ENCODE measurements at regions of chr16 and their contacts with region 1.

Region 1: DNA sequence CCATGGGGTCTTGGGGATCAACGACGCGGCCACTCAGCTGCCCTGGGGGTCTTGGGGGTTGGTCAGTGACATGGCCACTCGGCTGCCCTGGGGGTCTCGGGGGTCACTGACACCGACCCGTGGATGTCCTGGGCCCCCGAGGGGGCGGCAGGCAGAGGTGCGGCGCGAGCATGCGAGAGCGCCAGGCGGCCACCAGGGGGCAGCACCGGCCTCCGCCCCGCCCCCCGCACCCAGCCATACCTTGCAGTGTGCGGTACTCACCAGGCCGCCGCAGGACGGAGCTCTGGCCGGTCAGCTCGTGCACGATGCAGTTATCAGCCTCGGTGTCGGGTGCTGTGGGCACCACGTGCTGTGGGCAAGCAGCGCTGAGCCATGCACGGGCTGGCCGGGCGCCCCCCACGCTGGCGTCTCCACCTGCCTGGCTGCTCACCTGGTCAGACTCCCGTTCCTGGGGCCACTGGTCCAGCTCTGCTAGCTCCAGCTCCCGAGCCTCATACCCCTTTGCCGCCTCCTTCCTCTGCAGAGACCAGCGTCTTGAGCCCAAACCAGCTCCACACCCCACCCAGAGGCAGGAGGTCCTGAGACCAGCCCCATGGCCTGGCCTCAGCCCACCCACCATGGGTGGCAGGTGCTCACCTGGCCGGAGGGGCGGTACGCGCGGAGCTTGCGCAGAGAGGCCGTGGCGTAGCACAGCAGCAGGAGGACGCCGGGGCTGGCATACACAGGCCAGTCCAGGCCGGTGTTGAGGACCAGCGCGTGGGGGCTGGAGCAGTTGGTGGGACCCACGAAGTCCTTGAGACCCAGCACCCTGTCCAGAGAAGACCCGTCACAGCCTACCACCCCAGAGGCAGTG is 31.2 kb downstream of the CTU2 start:
- DNase-seq: no peak
- ATAC-seq: peak; percentile 82
- H3K4me3 ChIP-seq: no peak overlapping the region
- H3K27ac ChIP-seq: no peak overlapping the region
- H3K4me1 ChIP-seq: no peaks in the 10 kb centered on the region
- H3K27me3 ChIP-seq: no peaks in the 10 kb centered on the region
- CTCF ChIP-seq: peak; percentile 93

Region 2: DNA sequence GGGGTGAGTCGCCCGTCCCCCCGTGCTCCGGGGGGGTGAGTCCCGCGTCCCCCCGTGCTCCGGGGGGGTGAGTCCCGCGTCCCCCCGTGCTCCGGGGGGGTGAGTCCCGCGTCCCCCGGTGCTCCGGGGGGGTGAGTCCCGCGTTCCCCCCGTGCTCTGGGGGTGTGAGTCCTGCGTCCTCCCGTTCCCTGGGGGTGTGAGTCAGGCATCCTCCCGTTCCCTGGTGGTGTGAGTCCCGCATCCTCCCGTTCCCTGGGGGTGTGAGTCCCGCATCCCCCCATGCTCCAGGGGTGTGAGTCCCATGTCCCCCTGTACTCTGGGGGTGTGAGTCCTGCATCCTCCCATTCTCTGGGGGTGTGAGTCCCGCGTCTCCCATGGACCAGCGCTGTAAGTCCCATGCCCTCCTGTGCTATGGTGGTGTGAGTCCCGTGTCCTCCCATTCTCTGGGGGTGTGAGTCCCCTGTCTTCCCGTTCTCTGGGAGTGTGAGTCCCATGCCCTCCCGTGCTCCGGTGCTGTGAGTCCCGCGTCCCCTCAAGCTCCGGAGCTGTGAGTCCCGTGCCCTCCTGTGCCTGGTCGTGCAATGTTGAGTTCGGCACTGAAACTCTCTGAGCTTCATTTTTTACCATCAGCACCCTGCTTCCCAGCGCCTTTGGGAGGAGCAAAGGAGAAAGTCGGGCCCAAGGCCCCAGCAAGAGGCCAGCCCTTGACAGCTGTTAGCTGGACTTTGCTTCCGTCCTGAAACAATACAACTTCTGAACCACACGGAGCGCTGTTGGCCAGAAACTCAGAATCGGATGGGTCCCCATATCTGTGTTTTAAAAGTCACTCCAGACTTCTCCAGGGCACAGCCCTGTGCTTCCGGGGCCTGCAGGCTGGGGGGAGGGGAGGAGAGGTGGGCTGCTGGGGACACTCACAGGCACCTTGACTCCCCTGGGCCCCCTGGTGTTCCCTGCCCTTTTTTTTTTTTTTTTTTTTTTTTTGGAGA is 178.8 kb before region 1 on chr16:
- CTCF ChIA-PET with region 1: interaction called, 11 read pairs
- POLR2A ChIA-PET with region 1: no interaction called
- in situ Hi-C with region 1: no loop called
- intact Hi-C with region 1: no loop called
- DNase-seq: no peak
- ATAC-seq: peak; percentile 81
- H3K4me3 ChIP-seq: peak overlapping the region in 1 of 2 experiments; percentile 24; a peak in 1 of 4 replicates
- H3K27ac ChIP-seq: no peak overlapping the region
- H3K4me1 ChIP-seq: no peaks in the 10 kb centered on the region
- H3K27me3 ChIP-seq: no peaks in the 10 kb centered on the region
- CTCF ChIP-seq: peak; percentile 45

Measured in Panc1 (cell line).